ENCODE measurements at regions of chr2 and their contacts with region 1.

Region 1: GRCh38 chr2:146874260-146874658 is 970.6 kb upstream of the ACVR2A start:
- DNase-seq: peak; percentile 98
- H3K4me3 ChIP-seq: peak overlapping the region in 1 of 3 experiments; percentile 29
- H3K27ac ChIP-seq: peak overlapping the region; percentile 90
- H3K4me1 ChIP-seq: peaks cover 34% of the 10 kb centered on the region
- H3K27me3 ChIP-seq: no peaks in the 10 kb centered on the region
- CTCF ChIP-seq: no peak
- POLR2A ChIP-seq: peak; percentile 16

Region 2: GRCh38 chr2:145546091-145546490 is 1328.2 kb before region 1 on chr2:
- CTCF ChIA-PET with region 1: no interaction called
- POLR2A ChIA-PET with region 1: no interaction called
- dilution Hi-C with region 1: no loop called
- intact Hi-C with region 1: no loop called
- DNase-seq: no peak
- H3K4me3 ChIP-seq: no peak overlapping the region
- H3K27ac ChIP-seq: no peak overlapping the region
- H3K4me1 ChIP-seq: no peaks in the 10 kb centered on the region
- H3K27me3 ChIP-seq: no peaks in the 10 kb centered on the region
- CTCF ChIP-seq: no peak
- POLR2A ChIP-seq: no peak

Region 3: DNA sequence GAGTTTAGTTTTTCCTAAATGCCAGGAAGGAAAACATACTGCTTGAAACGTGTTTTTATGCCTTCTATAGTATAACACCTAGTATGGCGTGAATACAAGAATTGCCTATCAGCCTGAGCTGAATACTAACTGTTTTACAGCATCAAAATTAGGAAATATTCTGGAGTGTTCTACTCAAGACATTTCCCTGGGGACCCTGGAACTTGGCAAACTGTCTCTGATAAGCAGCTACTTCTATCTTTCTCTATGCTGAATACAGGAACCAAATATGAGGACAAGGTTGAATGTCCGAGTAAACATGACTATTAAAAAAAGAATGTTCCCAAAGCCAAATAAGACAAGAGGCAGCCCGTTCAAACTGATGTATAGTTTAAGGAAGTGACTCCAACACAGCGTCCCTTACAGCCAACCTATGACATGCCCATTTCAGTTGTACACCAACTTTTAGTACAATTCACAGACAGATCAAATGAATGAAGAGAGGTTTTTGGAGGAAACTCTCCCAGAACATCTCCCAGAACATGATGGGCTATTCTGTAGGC is 19.3 kb after region 1 on chr2:
- CTCF ChIA-PET with region 1: no interaction called
- POLR2A ChIA-PET with region 1: no interaction called
- dilution Hi-C with region 1: no loop called
- intact Hi-C with region 1: no loop called
- DNase-seq: no peak
- H3K4me3 ChIP-seq: no peak overlapping the region
- H3K27ac ChIP-seq: no peak overlapping the region
- H3K4me1 ChIP-seq: no peaks in the 10 kb centered on the region
- H3K27me3 ChIP-seq: no peaks in the 10 kb centered on the region
- CTCF ChIP-seq: no peak
- POLR2A ChIP-seq: no peak

Region 4: DNA sequence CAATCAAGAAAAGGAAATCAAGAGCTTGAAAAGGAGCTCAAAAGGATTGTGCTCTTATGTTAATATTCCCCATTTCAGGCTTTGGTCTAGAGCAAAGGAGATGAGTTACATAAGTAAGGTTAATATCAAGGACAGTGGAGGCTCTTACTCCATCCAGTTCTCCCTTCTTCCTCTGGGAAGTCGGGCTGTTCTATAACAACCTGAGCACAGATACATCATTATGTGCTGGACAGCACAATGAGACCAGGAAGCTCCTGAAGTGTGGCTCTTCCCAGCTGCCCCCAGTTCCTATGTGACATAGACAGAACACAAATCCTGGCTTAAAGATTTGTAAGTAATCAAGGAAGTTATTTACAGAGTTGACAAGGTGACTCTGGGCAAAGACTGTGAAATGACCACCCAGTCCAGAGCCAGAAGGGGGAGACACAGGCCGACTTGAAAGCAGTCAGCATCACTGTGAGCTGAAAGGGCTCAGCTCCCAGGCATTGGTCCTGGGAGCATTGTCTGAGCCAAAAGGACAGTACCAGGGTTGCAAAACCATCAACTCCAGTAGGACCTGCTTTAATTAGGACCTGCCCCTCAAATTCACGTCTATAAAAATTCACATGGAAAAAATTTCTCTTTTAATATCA is 52.9 kb after region 1 on chr2:
- CTCF ChIA-PET with region 1: interaction called, 3 read pairs
- POLR2A ChIA-PET with region 1: no interaction called
- dilution Hi-C with region 1: no loop called
- intact Hi-C with region 1: loop called (anchors 2 kb)
- DNase-seq: peak; percentile 59
- H3K4me3 ChIP-seq: no peak overlapping the region
- H3K27ac ChIP-seq: no peak overlapping the region
- H3K4me1 ChIP-seq: no peaks in the 10 kb centered on the region
- H3K27me3 ChIP-seq: no peaks in the 10 kb centered on the region
- CTCF ChIP-seq: peak; percentile 32 to 62
- POLR2A ChIP-seq: no peak

Region 5: GRCh38 chr2:146986161-146986560 is 111.9 kb after region 1 on chr2:
- CTCF ChIA-PET with region 1: no interaction called
- POLR2A ChIA-PET with region 1: no interaction called
- dilution Hi-C with region 1: no loop called
- intact Hi-C with region 1: loop called (anchors 1 kb)
- DNase-seq: peak; percentile 80
- H3K4me3 ChIP-seq: no peak overlapping the region
- H3K27ac ChIP-seq: no peak overlapping the region
- H3K4me1 ChIP-seq: peaks cover 6% of the 10 kb centered on the region
- H3K27me3 ChIP-seq: no peaks in the 10 kb centered on the region
- CTCF ChIP-seq: no peak
- POLR2A ChIP-seq: no peak

Region 6: DNA sequence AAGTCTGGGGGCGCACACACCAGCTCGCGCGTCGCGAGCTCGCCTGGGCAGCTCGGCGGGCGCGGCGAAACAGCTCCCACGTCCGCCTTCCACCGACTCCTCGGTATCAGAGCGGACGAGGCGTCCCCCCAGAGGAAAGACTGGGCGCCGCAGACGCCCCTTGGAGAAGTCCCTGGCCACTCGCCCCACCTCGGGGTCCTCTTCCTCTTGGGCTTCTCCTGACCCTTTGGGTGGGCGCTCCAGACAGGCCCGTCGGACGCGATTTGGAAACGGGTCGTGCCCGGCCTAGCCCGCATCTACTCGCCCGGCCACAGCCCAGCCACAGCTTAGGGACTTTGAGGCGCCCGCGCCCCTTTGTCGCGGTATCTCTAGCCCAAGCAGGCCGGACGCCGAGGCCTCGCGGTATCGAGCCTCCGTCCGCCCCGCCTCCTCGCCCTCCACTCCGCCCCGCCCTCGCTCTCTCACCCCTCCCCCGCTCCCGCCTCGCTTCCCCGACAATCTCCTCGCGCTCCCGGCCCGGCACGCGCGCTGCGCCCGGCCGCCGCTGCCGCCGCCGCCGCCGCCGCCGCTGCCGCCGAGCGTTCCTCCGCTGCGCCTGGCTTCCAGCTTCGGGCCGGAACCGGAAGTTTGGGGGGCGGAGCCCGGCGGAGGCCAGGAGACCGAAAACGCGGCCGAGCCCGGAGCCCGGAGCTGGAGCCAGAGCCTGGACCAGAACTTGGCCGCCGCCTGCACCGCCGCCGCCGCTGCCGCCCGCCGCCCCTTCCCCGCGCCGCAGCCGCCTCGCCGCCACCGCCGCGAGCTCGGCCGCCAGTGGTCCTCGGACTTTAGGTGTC is 969.8 kb after region 1 on chr2:
- CTCF ChIA-PET with region 1: no interaction called
- POLR2A ChIA-PET with region 1: no interaction called
- dilution Hi-C with region 1: no loop called
- intact Hi-C with region 1: loop called (anchors 1 kb)
- DNase-seq: peak; percentile 85
- H3K4me3 ChIP-seq: peak overlapping the region; percentile 60 to 95 (median 85)
- H3K27ac ChIP-seq: peak overlapping the region; percentile 70
- H3K4me1 ChIP-seq: peaks cover 20% of the 10 kb centered on the region
- H3K27me3 ChIP-seq: peaks cover 0 to 2% of the 10 kb centered on the region in 2 experiments
- CTCF ChIP-seq: peak in 1 of 2 donors; percentile 23
- POLR2A ChIP-seq: no peak